B cell (primary cell): ENCODE measurements at regions of chr6 and their contacts with region 1.

Region 1: DNA sequence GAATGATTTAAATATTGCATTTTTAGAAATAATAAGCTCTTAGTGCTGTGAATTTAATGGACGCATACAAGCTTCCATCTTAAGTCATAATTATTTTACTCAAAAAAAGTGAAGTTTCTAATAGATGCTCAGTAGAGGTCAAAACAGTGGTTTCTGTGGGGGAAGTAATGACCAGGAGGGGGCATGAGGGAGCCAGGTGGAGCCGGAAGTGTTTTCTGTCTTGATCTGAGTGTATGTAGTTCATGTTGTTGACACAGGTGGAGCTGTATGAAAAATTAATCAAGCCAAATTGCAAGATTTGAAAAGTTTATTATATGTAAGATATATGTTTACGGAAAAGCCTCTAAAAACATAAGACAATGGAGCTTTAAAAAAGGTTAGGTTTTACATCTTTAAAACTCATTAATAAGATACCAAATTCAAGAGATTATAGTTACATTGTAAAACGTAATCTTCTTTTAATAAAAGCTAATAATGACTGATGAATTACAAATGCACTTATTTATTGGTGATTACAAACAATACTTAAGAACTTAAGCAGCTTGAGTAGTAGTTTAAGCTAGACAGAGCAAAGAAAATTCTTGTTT is 68.0 kb downstream of the PLAGL1 start:
- DNase-seq: peak; percentile 74
- ATAC-seq: peak; percentile 98
- H3K4me3 ChIP-seq: no peak overlapping the region
- H3K4me3 Mint-ChIP-seq: no peak overlapping the region
- H3K27ac ChIP-seq: no peak overlapping the region
- H3K27ac Mint-ChIP-seq: no peak overlapping the region
- H3K4me1 ChIP-seq: no peaks in the 10 kb centered on the region
- H3K4me1 Mint-ChIP-seq: peaks cover 3% of the 10 kb centered on the region
- H3K27me3 ChIP-seq: no peaks in the 10 kb centered on the region
- H3K27me3 Mint-ChIP-seq: no peaks in the 10 kb centered on the region
- CTCF ChIP-seq: peak; percentile 92

Region 2: DNA sequence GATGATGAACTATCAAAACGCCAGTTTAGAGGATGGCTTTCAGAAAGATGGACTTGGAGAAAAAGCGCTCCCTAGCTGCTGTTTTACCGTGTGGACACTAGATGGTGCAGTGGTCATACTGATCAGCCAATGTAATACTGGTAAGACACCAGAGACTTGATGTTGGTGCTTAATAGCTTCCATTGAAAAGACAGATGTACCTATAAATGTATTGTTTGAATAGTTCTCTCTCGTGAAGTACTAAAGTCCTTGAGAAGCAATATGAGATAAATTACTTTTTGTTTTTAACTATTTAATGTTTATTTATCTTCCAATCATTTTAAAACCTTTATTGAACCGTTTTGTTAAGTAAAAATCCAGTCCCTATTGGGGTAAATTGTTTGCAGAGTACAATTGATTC is 364.7 kb before region 1 on chr6:
- CTCF ChIA-PET with region 1: interaction called, 8 read pairs
- POLR2A ChIA-PET with region 1: no interaction called
- intact Hi-C with region 1: loop called (anchors 1 kb)
- DNase-seq: peak; percentile 76
- ATAC-seq: peak; percentile 98
- H3K4me3 ChIP-seq: no peak overlapping the region
- H3K4me3 Mint-ChIP-seq: no peak overlapping the region
- H3K27ac ChIP-seq: no peak overlapping the region
- H3K27ac Mint-ChIP-seq: no peak overlapping the region
- H3K4me1 ChIP-seq: no peaks in the 10 kb centered on the region
- H3K4me1 Mint-ChIP-seq: no peaks in the 10 kb centered on the region
- H3K27me3 ChIP-seq: no peaks in the 10 kb centered on the region
- H3K27me3 Mint-ChIP-seq: no peaks in the 10 kb centered on the region
- CTCF ChIP-seq: peak; percentile 95

Region 3: GRCh38 chr6:143878316-143878924 is 61.7 kb before region 1 on chr6:
- CTCF ChIA-PET with region 1: no interaction called
- POLR2A ChIA-PET with region 1: no interaction called
- intact Hi-C with region 1: no loop called
- DNase-seq: no peak
- ATAC-seq: no peak
- H3K4me3 ChIP-seq: no peak overlapping the region
- H3K4me3 Mint-ChIP-seq: no peak overlapping the region
- H3K27ac ChIP-seq: no peak overlapping the region
- H3K27ac Mint-ChIP-seq: no peak overlapping the region
- H3K4me1 ChIP-seq: no peaks in the 10 kb centered on the region
- H3K4me1 Mint-ChIP-seq: peaks cover 4% of the 10 kb centered on the region
- H3K27me3 ChIP-seq: no peaks in the 10 kb centered on the region
- H3K27me3 Mint-ChIP-seq: no peaks in the 10 kb centered on the region
- CTCF ChIP-seq: no peak

Region 4: GRCh38 chr6:143929975-143930374 is 10.1 kb before region 1 on chr6:
- CTCF ChIA-PET with region 1: interaction called, 12 read pairs
- POLR2A ChIA-PET with region 1: no interaction called
- intact Hi-C with region 1: no loop called
- DNase-seq: no peak
- ATAC-seq: no peak
- H3K4me3 ChIP-seq: no peak overlapping the region
- H3K4me3 Mint-ChIP-seq: no peak overlapping the region
- H3K27ac ChIP-seq: no peak overlapping the region
- H3K27ac Mint-ChIP-seq: no peak overlapping the region
- H3K4me1 ChIP-seq: no peaks in the 10 kb centered on the region
- H3K4me1 Mint-ChIP-seq: no peaks in the 10 kb centered on the region
- H3K27me3 ChIP-seq: no peaks in the 10 kb centered on the region
- H3K27me3 Mint-ChIP-seq: no peaks in the 10 kb centered on the region
- CTCF ChIP-seq: no peak

Region 5: DNA sequence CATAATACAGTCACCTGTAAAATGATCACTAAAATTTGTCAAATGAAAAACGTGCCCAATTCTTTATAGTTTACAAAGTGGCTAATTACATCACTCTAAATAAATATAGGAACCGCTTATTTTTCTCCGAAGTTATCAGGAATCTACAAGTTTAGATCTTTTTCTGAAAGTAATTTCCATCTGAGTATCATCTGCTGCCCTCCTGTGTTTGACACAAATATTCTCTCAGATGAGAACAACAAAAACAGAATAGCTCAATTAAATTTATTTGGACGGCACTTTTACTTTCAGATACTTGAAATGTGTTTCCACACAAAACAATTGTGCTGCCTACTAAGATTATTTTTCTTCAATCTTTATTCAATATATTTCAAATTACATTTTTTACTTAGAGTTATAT is 150.3 kb after region 1 on chr6:
- CTCF ChIA-PET with region 1: interaction called, 11 read pairs
- POLR2A ChIA-PET with region 1: no interaction called
- intact Hi-C with region 1: no loop called
- DNase-seq: no peak
- ATAC-seq: no peak
- H3K4me3 ChIP-seq: no peak overlapping the region
- H3K4me3 Mint-ChIP-seq: no peak overlapping the region
- H3K27ac ChIP-seq: no peak overlapping the region
- H3K27ac Mint-ChIP-seq: no peak overlapping the region
- H3K4me1 ChIP-seq: peaks cover 19 to 22% of the 10 kb centered on the region in 2 donors
- H3K4me1 Mint-ChIP-seq: peaks cover 25% of the 10 kb centered on the region
- H3K27me3 ChIP-seq: no peaks in the 10 kb centered on the region
- H3K27me3 Mint-ChIP-seq: no peaks in the 10 kb centered on the region
- CTCF ChIP-seq: peak; percentile 24

Region 6: GRCh38 chr6:144349690-144350527 is 409.8 kb after region 1 on chr6:
- CTCF ChIA-PET with region 1: no interaction called
- POLR2A ChIA-PET with region 1: no interaction called
- intact Hi-C with region 1: no loop called
- DNase-seq: peak; percentile 56
- ATAC-seq: peak; percentile 56
- H3K4me3 ChIP-seq: peak overlapping the region in 4 of 5 experiments; percentile 9 to 55 (median 46)
- H3K4me3 Mint-ChIP-seq: peak overlapping the region; percentile 83
- H3K27ac ChIP-seq: peak overlapping the region; percentile 79 to 80
- H3K27ac Mint-ChIP-seq: peak overlapping the region; percentile 96
- H3K4me1 ChIP-seq: peaks cover 85 to 95% of the 10 kb centered on the region in 2 donors
- H3K4me1 Mint-ChIP-seq: peaks cover 85% of the 10 kb centered on the region
- H3K27me3 ChIP-seq: no peaks in the 10 kb centered on the region
- H3K27me3 Mint-ChIP-seq: no peaks in the 10 kb centered on the region
- CTCF ChIP-seq: no peak